A549 (cell line): ENCODE measurements at regions of chr19 and their contacts with region 1.

Region 1: DNA sequence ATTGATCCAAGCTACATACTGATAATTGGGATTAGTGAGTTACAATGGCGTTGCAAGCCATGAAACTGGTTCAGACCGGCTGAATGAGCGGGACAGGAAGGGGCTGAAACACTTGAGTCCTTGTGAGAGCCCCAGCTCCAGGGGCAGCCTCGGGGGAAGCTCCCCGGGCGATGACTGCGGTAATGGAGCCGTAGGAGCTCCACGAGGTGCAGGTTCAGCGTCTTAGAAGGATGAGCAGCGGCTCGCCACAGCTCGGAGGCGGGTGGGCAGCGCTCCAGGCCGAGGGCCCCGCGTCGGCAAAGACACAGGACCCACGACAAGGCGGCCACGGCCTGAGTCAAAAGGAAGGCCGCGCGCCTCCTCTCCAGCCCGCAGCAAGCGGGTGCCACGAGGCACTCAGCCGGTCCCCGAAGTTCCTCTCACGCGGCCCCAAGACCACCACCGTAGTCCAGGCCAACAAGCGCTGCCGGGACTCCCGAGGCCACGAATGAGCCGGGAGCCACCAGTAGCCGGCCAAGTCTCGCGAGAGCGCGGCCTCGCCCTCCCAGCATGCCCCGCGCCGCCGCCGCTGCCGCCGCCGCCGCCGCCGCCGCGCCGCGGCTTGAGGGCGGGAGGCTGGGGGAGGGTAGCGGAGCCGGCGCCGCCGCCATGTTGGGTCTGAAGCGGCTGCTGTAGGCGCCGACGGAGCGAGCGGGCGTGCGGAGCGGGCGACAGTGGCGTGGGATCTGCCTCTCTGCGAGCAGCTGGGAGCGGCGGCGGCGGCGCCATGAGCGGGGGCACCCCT is at the start of gene LSM14A:
- DNase-seq: peak; percentile 97 to 98
- ATAC-seq: peak; percentile 86 to 87
- H3K4me3 ChIP-seq: peak within 1 kb of the TSS; percentile 67
- H3K27ac ChIP-seq: peak within 1 kb of the TSS; percentile 94 to 95
- H3K4me1 ChIP-seq: peaks cover 38% of the 10 kb centered on the region
- CTCF ChIP-seq: no peak
- EP300 ChIP-seq: no peak
- POLR2A ChIP-seq: peak; percentile 98
- RAD21 ChIP-seq: no peak
- polyA plus RNA-seq, gene LSM14A: 264 and 278 TPM in 2 replicates

Region 2: DNA sequence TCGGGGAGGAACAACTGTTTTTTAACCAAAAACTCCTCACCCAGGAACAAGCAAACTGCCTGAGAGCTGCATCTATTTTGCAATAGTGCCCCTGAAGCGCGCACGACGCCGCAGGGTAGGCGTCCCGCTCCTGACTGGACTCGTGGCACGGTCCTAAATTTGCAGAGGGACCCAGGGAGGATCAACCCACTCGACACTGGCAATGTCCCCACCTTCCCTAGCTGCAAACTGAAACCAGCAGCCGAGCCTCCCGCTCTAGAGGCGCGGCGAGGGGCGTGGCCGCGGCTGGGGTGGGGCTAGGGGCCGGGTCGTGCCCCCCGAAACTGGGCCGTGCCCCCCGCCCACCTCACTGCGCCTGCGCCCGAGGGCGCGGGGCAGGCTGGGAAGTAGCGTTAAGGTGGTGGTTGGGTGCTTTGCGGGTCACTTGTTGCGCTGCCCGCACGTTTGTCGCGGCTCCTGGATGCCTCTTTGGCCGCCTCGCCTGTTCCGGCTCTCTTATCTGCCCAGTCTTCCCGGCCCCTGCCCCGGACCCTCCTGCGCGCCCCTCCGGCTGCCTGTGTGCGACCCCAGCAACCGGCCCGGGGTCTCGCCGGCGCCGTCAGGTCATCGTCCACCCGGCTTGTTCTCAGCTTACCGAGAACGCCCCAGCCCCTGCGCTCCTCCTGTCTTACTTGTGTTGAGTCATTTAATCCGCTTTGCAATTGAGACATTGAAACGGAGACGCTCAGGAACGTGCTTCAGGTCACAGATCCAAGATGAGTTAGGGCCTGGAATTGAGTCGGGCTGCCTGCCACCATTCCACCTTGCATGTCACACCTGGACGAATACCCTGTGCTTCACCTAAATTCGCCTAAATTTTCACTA is 37.6 kb before region 1 on chr19:
- CTCF ChIA-PET with region 1: no interaction called
- POLR2A ChIA-PET with region 1: interaction called, 21 read pairs
- DNase-seq: peak; percentile 93 to 99
- ATAC-seq: peak; percentile 94 to 97
- H3K4me3 ChIP-seq: peak overlapping the region; percentile 65
- H3K27ac ChIP-seq: peak overlapping the region; percentile 87 to 93
- H3K4me1 ChIP-seq: peaks cover 10% of the 10 kb centered on the region; the same call in 2 of the 3 replicates
- CTCF ChIP-seq: no peak
- EP300 ChIP-seq: no peak
- POLR2A ChIP-seq: peak; percentile 98
- RAD21 ChIP-seq: no peak

Region 3: GRCh38 chr19:34155686-34156085 is 16.4 kb before region 1 on chr19:
- CTCF ChIA-PET with region 1: interaction called, 13 read pairs
- POLR2A ChIA-PET with region 1: interaction called, 4 read pairs
- DNase-seq: no peak
- ATAC-seq: no peak
- H3K4me3 ChIP-seq: no peak overlapping the region
- H3K27ac ChIP-seq: no peak overlapping the region
- H3K4me1 ChIP-seq: peaks cover 14% of the 10 kb centered on the region
- CTCF ChIP-seq: no peak
- EP300 ChIP-seq: no peak
- POLR2A ChIP-seq: no peak
- RAD21 ChIP-seq: no peak